ENCODE measurements at regions of chr21 and their contacts with region 1.

Region 1: GRCh38 chr21:45050786-45051489 is 23.4 kb upstream of the ADARB1 start:
- DNase-seq: no peak
- H3K4me3 ChIP-seq: no peak overlapping the region
- H3K27ac ChIP-seq: no peak overlapping the region
- H3K4me1 ChIP-seq: no peaks in the 10 kb centered on the region
- H3K27me3 ChIP-seq: no peaks in the 10 kb centered on the region
- CTCF ChIP-seq: no peak
- POLR2A ChIP-seq: no peak

Region 2: DNA sequence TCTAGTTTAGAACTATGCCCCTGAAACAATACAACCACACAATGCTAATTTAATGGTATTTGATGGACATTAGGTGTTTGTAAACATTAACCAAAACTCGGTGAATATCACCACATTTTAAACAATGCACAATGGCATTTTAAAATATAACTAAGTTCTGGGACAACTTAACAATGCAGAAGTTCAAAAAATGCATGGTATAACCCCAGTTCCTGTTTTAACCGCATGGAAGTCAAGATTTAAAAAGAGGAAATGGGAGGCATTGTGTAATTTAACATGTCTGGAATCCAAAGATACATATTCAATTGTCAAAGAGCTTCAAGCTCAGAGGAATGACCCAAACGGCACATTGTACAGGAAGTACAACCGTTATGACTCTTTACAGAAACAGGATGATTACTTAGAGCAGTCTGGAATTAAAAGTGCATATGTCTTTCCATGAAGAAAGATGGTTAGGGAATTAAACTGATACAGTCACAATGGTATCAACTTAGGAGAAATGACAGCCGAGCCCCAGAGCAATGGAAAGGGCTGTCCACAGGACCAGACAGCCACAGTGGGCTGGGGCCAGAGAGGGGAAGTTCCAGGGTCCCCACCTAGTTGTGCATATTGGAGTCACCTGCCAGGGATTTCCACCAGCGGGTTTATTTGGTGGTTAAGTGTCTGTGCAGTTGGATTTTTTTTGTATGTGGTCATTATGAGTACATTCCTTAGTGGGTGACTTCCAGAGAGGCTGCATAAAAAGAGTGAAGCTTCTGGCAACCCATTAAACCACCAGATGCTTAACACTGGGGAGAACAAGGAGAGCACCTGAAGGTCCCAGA is 170.0 kb before region 1 on chr21:
- intact Hi-C with region 1: no loop called
- DNase-seq: no peak
- H3K4me3 ChIP-seq: no peak overlapping the region
- H3K27ac ChIP-seq: no peak overlapping the region
- H3K4me1 ChIP-seq: no peaks in the 10 kb centered on the region
- H3K27me3 ChIP-seq: no peaks in the 10 kb centered on the region
- CTCF ChIP-seq: no peak
- POLR2A ChIP-seq: no peak

Region 3: GRCh38 chr21:44962403-44962966 is 88.5 kb before region 1 on chr21:
- intact Hi-C with region 1: loop called (anchors 2 kb)
- DNase-seq: no peak
- H3K4me3 ChIP-seq: no peak overlapping the region
- H3K27ac ChIP-seq: no peak overlapping the region
- H3K4me1 ChIP-seq: no peaks in the 10 kb centered on the region
- H3K27me3 ChIP-seq: no peaks in the 10 kb centered on the region
- CTCF ChIP-seq: no peak
- POLR2A ChIP-seq: no peak

Region 4: GRCh38 chr21:44994695-44995342 is 56.1 kb before region 1 on chr21:
- intact Hi-C with region 1: loop called (anchors 2 kb)
- DNase-seq: no peak
- H3K4me3 ChIP-seq: no peak overlapping the region
- H3K27ac ChIP-seq: no peak overlapping the region
- H3K4me1 ChIP-seq: no peaks in the 10 kb centered on the region
- H3K27me3 ChIP-seq: no peaks in the 10 kb centered on the region
- CTCF ChIP-seq: no peak
- POLR2A ChIP-seq: no peak

Region 5: DNA sequence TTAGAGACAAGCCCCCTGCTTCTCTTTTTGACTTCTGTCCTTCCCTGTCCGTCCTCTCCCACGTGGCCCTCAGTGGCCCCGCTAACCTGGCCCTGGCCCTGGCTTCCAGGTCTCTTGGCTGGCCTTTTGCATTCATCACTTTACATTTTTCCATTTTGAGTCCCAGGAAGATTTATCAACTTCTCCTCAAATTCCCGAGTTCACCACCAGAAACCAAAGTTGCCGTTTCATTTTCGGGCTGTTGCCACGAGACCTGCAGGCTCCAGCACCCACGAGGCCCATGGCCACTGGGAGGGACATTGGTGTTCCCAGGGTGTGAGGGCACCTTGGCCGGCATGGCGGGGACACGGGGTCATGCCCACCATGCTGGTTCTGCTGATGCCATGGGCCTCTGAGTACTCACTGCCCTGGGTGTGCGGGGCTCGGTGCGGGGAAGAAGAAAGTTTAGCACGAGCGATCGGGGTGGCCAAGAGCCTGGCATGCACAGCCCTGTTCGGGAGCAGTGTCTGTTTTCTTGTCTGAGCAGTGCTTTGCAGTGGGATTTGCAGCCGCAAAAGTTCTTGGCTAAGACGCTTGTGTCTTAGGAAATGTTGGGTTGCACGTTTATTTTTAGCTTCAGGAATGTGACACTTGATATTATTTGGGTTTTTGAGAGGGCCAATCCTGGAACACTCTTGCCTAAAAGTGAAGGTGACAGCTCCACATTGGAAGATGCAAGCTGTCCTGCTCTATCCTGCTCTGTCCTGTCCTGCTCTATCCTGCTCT is 17.0 kb before region 1 on chr21:
- intact Hi-C with region 1: loop called (anchors 1 kb)
- DNase-seq: no peak
- H3K4me3 ChIP-seq: no peak overlapping the region
- H3K27ac ChIP-seq: peak overlapping the region in 1 of 2 donors; percentile 63
- H3K4me1 ChIP-seq: no peaks in the 10 kb centered on the region
- H3K27me3 ChIP-seq: no peaks in the 10 kb centered on the region
- CTCF ChIP-seq: no peak
- POLR2A ChIP-seq: no peak

Region 6: DNA sequence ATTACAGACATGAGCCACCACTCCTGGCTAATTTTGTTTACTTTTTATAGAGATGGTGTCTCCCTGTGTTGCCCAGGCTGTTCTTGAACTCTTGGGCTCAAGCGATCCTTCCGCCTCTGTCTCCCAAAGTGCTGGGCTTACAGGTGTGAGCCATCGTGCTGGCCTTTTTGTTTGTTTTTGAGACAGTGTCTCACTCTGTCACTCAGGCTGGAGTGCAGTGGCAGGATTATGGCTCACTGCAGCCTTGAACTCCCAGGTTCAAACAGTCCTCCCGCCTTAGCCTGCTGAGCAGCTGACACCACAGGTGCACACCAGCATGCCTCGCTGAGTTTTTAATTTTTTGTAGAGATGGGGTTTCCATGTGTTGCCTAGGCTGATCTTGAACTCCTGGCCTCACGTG is 72.5 kb after region 1 on chr21:
- intact Hi-C with region 1: loop called (anchors 5 kb)
- DNase-seq: no peak
- H3K4me3 ChIP-seq: no peak overlapping the region
- H3K27ac ChIP-seq: no peak overlapping the region
- H3K4me1 ChIP-seq: peaks cover 6% of the 10 kb centered on the region
- H3K27me3 ChIP-seq: no peaks in the 10 kb centered on the region
- CTCF ChIP-seq: no peak
- POLR2A ChIP-seq: no peak